Dorsolateral prefrontal cortex (tissue), 120 donors: ENCODE measurements at regions of chr6 and their contacts with region 1.

Region 1: GRCh38 chr6:129084406-129084805 is 201.5 kb downstream of the LAMA2 start:
- DNase-seq: no peak
- H3K4me3 ChIP-seq: no peak overlapping the region
- H3K27ac ChIP-seq: no peak overlapping the region
- H3K27me3 ChIP-seq: no peaks in the 10 kb centered on the region
- CTCF ChIP-seq: no peak

Region 2: GRCh38 chr6:128179876-128180438 is 904.4 kb before region 1 on chr6:
- intact Hi-C with region 1: no loop called
- DNase-seq: no peak
- H3K4me3 ChIP-seq: no peak overlapping the region
- H3K27ac ChIP-seq: peak overlapping the region in 2 of 59 donors; percentile 3 to 48
- H3K27me3 ChIP-seq: no peaks in the 10 kb centered on the region
- CTCF ChIP-seq: no peak

Region 3: GRCh38 chr6:129041563-129041962 is 42.8 kb before region 1 on chr6:
- intact Hi-C with region 1: loop called in 1 of 2 experiments (anchors 2 kb)
- DNase-seq: no peak
- H3K4me3 ChIP-seq: no peak overlapping the region
- H3K27ac ChIP-seq: no peak overlapping the region
- H3K27me3 ChIP-seq: no peaks in the 10 kb centered on the region
- CTCF ChIP-seq: no peak

Region 4: GRCh38 chr6:129448965-129449364 is 364.6 kb after region 1 on chr6:
- intact Hi-C with region 1: no loop called
- DNase-seq: no peak
- H3K4me3 ChIP-seq: no peak overlapping the region
- H3K27ac ChIP-seq: no peak overlapping the region
- H3K27me3 ChIP-seq: no peaks in the 10 kb centered on the region
- CTCF ChIP-seq: no peak